ENCODE measurements at regions of chr7 and their contacts with region 1.

Region 1: DNA sequence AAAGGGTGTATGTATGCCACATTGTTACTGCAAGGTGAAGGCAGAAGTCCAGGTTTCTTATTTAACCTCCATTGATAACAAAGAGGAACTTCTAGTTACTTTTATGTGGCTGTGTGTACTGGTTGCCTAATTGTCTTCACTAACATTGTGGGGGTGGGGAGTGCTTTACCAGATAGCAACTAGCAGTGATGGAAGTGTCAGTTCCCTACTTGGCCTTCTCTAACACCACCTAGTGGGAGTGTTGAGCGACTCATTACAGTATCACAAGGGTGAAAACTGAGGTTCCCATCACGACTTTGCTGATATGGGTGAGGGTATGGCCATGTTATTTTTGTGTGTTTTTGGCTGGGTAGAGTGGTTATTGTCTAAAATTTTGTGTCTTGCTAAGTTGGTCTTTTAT is 274.4 kb downstream of the THSD7A start:
- DNase-seq: no peak
- H3K4me3 Mint-ChIP-seq: no peak overlapping the region
- H3K27ac Mint-ChIP-seq: no peak overlapping the region
- H3K4me1 Mint-ChIP-seq: no peaks in the 10 kb centered on the region
- H3K27me3 Mint-ChIP-seq: no peaks in the 10 kb centered on the region

Region 2: GRCh38 chr7:11427686-11428273 is 129.8 kb before region 1 on chr7:
- intact Hi-C with region 1: loop called (anchors 1 kb)
- DNase-seq: no peak
- H3K4me3 Mint-ChIP-seq: no peak overlapping the region
- H3K27ac Mint-ChIP-seq: no peak overlapping the region
- H3K4me1 Mint-ChIP-seq: no peaks in the 10 kb centered on the region
- H3K27me3 Mint-ChIP-seq: no peaks in the 10 kb centered on the region

Region 3: GRCh38 chr7:11450281-11450680 is 107.3 kb before region 1 on chr7:
- intact Hi-C with region 1: no loop called
- DNase-seq: no peak
- H3K4me3 Mint-ChIP-seq: no peak overlapping the region
- H3K27ac Mint-ChIP-seq: no peak overlapping the region
- H3K4me1 Mint-ChIP-seq: no peaks in the 10 kb centered on the region
- H3K27me3 Mint-ChIP-seq: no peaks in the 10 kb centered on the region

Region 4: GRCh38 chr7:11486271-11486670 is 71.4 kb before region 1 on chr7:
- intact Hi-C with region 1: no loop called
- DNase-seq: no peak
- H3K4me3 Mint-ChIP-seq: no peak overlapping the region
- H3K27ac Mint-ChIP-seq: no peak overlapping the region
- H3K4me1 Mint-ChIP-seq: no peaks in the 10 kb centered on the region
- H3K27me3 Mint-ChIP-seq: no peaks in the 10 kb centered on the region

Measured in activated T-helper 2 cell treated with anti-CD3 and anti-CD28 coated beads, Interferon-gamma antibody, Interleukin-2, Interleukin-4, amounts not matched to agents 10 μg/mL and 5 μg/mL and 100 μg/mL, durations not matched to agents 14 hours and 24 hours and 36 hours (primary cell).